Left ventricle myocardium inferior (tissue), 1 donor: ENCODE measurements at regions of chr2 and their contacts with region 1.

Region 1: DNA sequence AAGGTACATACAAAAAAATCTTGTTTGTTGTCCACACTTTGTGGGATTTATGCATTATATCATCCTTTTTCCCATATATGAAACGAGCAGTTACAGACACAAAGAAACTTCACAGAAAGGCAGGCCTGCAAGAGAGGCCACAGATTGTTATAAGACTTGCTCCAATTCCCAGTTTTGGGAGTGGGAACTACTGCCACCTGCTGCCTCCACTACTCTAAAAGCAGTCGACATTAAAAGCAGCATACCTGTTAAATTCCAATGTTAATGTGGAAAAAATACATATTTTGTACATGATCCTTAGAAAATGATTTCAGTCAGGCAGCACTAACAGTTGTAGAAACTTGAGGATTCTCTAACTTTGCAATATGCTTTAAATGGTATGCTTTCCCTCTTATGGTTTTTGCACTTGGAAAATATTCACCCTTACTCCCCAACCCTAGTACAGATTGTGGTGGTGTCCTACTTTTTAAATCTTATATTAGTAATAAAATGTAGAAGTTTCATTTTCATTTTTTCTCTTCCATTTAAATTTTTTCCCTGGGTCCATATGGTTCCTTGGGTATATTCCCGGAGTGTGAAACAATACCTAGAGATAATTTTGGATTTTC is 37.9 kb downstream of the SLC38A11 start:
- DNase-seq: peak; percentile 41
- H3K4me3 ChIP-seq: no peak overlapping the region
- H3K27ac ChIP-seq: no peak overlapping the region
- H3K4me1 ChIP-seq: peaks cover 24% of the 10 kb centered on the region
- H3K27me3 ChIP-seq: no peaks in the 10 kb centered on the region
- CTCF ChIP-seq: peak; percentile 78

Region 2: DNA sequence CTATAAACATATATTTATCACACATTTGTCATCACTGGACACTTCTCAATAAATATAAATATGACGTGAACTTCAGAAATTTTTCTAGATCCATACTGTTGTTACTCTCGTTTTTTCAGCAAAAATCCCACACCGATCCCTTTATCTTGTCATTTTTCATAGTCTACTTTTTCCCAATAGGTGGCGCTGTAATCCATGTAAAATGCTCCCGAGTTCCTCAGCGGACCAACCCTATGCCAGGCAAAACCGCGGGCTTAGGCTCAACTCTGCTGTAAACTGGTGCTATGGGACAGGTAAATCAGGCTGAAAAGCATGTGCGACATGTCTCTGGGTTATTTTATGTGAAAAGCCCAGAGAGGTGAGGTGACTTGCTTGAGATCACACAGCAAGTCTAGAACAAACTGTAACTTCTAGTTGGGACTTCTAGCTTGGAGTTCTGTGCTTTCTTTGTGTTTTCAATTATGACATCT is 179.8 kb before region 1 on chr2:
- intact Hi-C with region 1: loop called (anchors 2 kb)
- DNase-seq: no peak
- H3K4me3 ChIP-seq: no peak overlapping the region
- H3K27ac ChIP-seq: no peak overlapping the region
- H3K4me1 ChIP-seq: peaks cover 49% of the 10 kb centered on the region
- H3K27me3 ChIP-seq: no peaks in the 10 kb centered on the region
- CTCF ChIP-seq: peak; percentile 78

Region 3: DNA sequence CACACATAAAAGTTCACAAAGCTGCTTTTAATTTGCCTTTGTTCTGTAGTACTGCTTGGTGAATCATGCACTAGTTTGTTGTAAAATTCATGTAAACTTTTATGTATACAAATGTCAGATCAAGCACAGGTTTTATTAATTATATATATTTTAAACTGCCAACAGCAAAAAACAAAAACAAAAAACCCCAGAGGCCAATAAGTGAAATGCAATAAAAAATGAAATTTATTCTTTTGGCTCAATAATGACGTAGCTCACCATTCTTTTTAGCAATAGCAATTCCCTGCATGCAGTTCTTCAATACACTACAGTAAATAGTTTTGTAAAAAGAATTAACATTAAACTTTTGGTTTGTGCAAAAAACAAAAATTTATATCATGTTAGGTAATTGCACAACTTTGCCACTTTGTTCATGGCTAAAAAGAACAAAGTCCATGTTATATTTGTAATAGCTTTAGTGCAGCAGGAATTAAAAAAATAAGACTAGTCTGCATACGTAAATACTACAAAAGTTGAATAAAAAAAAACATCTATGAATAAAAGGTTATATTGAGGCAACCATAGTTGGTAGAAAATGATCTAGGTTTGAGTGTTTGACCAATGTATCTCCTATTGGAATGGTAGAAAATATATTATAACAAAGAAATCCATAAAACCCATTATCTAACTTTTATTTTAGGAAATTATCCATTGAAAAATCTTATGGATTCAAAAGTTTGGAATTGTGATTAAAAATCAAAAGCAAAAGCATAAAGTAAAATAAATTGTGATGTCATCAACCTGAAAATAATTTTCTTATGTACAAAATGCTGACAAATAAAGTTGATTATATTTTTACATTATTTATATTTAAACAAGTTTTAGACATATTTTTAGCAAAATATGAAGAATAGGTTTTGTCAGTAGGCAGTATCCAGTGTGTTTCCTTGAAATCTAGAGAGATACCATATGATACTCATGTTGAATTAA is 170.8 kb after region 1 on chr2:
- intact Hi-C with region 1: no loop called
- DNase-seq: no peak
- H3K4me3 ChIP-seq: no peak overlapping the region
- H3K27ac ChIP-seq: no peak overlapping the region
- H3K4me1 ChIP-seq: no peaks in the 10 kb centered on the region
- H3K27me3 ChIP-seq: no peaks in the 10 kb centered on the region
- CTCF ChIP-seq: no peak